Calu3 (cell line): ENCODE measurements at regions of chr6 and their contacts with region 1.

Region 1: GRCh38 chr6:20056350-20056992 is 155.8 kb downstream of the MBOAT1 start:
- DNase-seq: peak; percentile 43
- H3K4me3 Mint-ChIP-seq: no peak overlapping the region
- H3K27ac Mint-ChIP-seq: no peak overlapping the region
- H3K4me1 Mint-ChIP-seq: no peaks in the 10 kb centered on the region
- H3K27me3 Mint-ChIP-seq: peaks cover 14% of the 10 kb centered on the region
- CTCF ChIP-seq: peak; percentile 68

Region 2: GRCh38 chr6:18595774-18596530 is 1460.5 kb before region 1 on chr6:
- CTCF ChIA-PET with region 1: no interaction called
- intact Hi-C with region 1: loop called (anchors 1 kb)
- DNase-seq: peak; percentile 55
- H3K4me3 Mint-ChIP-seq: no peak overlapping the region
- H3K27ac Mint-ChIP-seq: no peak overlapping the region
- H3K4me1 Mint-ChIP-seq: no peaks in the 10 kb centered on the region
- H3K27me3 Mint-ChIP-seq: peaks cover 29% of the 10 kb centered on the region
- CTCF ChIP-seq: peak; percentile 58

Region 3: GRCh38 chr6:18997375-18997826 is 1059.1 kb before region 1 on chr6:
- CTCF ChIA-PET with region 1: no interaction called
- intact Hi-C with region 1: loop called (anchors 1 kb)
- DNase-seq: no peak
- H3K4me3 Mint-ChIP-seq: no peak overlapping the region
- H3K27ac Mint-ChIP-seq: no peak overlapping the region
- H3K4me1 Mint-ChIP-seq: no peaks in the 10 kb centered on the region
- H3K27me3 Mint-ChIP-seq: peaks cover 17% of the 10 kb centered on the region
- CTCF ChIP-seq: peak; percentile 33

Region 4: DNA sequence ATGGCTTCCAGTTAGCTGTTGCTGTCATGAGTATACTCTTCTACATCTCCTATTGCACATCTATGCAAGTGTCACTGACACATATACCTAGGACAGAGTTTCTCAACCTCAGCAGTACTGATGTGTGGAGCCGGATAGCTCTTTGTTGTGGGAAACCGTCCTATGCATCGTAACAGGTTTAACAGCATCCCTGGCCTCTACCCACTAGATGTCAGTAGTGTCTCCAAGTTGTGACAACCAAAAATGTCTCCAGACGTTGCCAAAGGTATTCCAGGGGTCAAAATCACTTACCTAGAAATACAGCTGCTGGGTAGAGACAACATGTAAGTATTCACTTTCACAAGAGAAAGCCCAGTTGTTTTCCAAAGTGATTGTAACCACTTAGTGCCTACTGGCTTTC is 1031.7 kb before region 1 on chr6:
- CTCF ChIA-PET with region 1: interaction called, 10 read pairs
- intact Hi-C with region 1: loop called (anchors 1 kb)
- DNase-seq: peak; percentile 18
- H3K4me3 Mint-ChIP-seq: no peak overlapping the region
- H3K27ac Mint-ChIP-seq: no peak overlapping the region
- H3K4me1 Mint-ChIP-seq: no peaks in the 10 kb centered on the region
- H3K27me3 Mint-ChIP-seq: no peaks in the 10 kb centered on the region
- CTCF ChIP-seq: no peak

Region 5: GRCh38 chr6:19410481-19410880 is 646.0 kb before region 1 on chr6:
- CTCF ChIA-PET with region 1: no interaction called
- intact Hi-C with region 1: loop called (anchors 10 kb)
- DNase-seq: peak; percentile 21
- H3K4me3 Mint-ChIP-seq: no peak overlapping the region
- H3K27ac Mint-ChIP-seq: no peak overlapping the region
- H3K4me1 Mint-ChIP-seq: peaks cover 20% of the 10 kb centered on the region
- H3K27me3 Mint-ChIP-seq: no peaks in the 10 kb centered on the region
- CTCF ChIP-seq: no peak

Region 6: DNA sequence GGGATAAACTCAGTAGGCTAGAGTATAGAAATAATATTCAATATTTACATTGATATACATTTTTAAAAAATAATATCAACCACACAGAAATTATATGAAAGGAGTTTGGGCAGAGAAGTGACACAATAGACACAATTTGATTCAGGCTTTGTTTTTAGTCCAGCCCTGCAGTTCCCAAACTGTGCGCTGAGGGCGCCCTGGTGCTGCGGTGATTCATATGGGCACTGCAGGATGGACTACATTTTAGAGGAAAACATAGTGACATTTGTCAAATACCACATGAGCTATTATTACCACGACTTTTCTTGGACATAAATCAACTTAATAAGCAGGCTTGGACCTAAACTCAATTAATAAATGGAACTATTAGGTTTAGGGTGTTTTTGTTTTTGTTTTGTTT is 583.6 kb before region 1 on chr6:
- CTCF ChIA-PET with region 1: no interaction called
- intact Hi-C with region 1: loop called (anchors 10 kb)
- DNase-seq: peak; percentile 27
- H3K4me3 Mint-ChIP-seq: no peak overlapping the region
- H3K27ac Mint-ChIP-seq: no peak overlapping the region
- H3K4me1 Mint-ChIP-seq: peaks cover 9% of the 10 kb centered on the region
- H3K27me3 Mint-ChIP-seq: no peaks in the 10 kb centered on the region
- CTCF ChIP-seq: peak; percentile 35

Region 7: DNA sequence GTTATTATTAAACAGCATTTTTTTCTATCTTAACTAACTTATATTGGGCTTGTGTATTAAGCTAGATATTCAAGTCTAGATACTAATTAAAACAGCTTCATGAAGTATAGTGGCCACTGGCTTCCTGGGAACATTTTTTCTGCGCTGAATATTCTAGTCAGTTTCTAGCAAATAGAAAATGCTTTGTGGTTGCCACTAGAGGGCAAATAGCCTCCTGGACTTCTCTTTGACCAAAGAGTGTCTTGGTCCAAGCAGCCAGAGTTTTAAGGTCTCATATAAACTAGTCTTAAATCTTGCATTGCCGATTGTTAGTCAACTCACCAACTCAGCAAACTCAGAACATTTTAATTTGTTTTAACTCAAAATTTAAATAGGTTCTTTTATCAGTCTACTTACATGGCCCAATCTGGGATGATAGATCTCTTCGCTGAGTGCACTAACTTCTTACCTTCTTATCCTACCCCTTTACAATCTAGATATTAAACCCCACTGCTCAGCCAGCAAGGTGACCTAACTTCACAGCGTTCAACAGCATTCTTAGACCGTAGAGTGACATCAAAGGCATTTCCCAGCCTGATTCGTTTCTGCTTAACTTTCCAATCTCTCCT is 243.9 kb before region 1 on chr6:
- CTCF ChIA-PET with region 1: interaction called, 3 read pairs
- intact Hi-C with region 1: loop called (anchors 1 kb)
- DNase-seq: no peak
- H3K4me3 Mint-ChIP-seq: no peak overlapping the region
- H3K27ac Mint-ChIP-seq: no peak overlapping the region
- H3K4me1 Mint-ChIP-seq: peaks cover 13% of the 10 kb centered on the region
- H3K27me3 Mint-ChIP-seq: no peaks in the 10 kb centered on the region
- CTCF ChIP-seq: peak; percentile 82

Region 8: GRCh38 chr6:20669571-20670314 is 613.3 kb after region 1 on chr6:
- CTCF ChIA-PET with region 1: no interaction called
- intact Hi-C with region 1: no loop called
- DNase-seq: no peak
- H3K4me3 Mint-ChIP-seq: no peak overlapping the region
- H3K27ac Mint-ChIP-seq: no peak overlapping the region
- H3K4me1 Mint-ChIP-seq: peaks cover 18% of the 10 kb centered on the region
- H3K27me3 Mint-ChIP-seq: no peaks in the 10 kb centered on the region
- CTCF ChIP-seq: no peak